ENCODE measurements at regions of chr11 and their contacts with region 1.

Region 1: DNA sequence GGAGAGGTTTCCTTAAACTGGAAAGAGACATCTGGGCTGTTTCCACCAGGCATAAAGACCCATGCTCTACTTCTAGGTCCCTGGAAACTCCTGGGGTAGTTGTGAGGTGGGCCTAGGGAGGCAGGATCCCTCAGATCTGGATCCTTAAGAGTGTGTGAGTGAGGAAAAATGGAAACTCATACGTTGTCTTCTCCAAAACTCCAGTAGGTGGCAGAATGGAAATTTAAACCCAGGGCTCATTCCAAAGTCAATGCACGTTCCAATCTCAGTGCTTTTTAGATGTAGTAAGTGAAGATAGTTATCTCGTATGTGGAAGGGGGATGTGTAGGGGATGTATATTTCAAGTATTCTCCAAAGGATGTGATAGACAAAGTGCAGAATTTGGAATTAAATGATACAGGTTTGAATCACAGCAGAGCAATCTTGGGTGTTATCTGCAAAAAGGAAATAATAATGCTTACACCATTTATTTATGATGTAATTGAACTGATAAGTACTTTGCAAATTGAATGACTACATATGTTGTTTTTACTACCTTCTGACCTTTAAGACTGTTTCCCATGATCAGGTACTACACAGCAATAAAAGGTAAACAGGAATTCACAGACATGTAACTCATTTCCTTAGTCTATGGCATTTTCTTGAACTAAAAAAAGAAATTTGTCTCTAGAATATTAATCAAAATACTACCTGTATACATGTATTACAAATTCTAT is 13.1 kb upstream of the MMP1 start:
- DNase-seq: peak; percentile 55
- H3K4me3 ChIP-seq: no peak overlapping the region
- H3K27ac ChIP-seq: no peak overlapping the region
- H3K4me1 ChIP-seq: peaks cover 5% of the 10 kb centered on the region
- H3K27me3 ChIP-seq: no peaks in the 10 kb centered on the region

Region 2: DNA sequence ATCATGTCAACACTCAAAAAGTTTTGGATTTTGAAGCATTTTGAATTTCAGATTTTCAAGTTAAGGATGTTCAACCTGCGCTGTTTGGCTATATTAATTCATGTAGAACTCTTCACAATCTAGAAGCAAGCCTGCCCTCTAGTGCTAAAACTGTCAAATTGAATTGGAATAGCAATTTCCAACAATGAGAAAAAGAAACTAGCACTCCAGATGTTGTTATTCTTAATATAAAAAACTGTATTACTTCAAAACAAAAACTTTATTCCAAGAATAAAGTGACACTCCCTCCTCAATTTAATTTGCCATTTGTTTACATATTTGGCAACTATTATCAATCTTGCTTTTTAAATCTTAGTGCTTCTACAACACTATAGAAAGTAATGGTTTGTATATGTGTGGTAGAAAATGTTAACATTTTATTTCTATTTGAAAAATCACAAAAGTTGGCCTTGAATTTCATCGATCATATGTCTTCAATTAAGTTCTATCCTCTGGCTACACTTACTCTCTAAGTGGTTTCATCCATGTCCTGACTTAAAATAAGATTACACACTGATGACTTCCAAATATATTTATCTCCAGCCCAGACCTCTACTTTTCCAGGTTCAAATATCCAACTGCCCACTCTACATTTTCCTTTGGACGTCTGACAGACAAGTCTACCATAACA is 244.3 kb after region 1 on chr11:
- in situ Hi-C with region 1: loop called (anchors 25 kb)
- DNase-seq: peak; percentile 79
- H3K4me3 ChIP-seq: no peak overlapping the region
- H3K27ac ChIP-seq: no peak overlapping the region
- H3K4me1 ChIP-seq: peaks cover 24% of the 10 kb centered on the region
- H3K27me3 ChIP-seq: no peaks in the 10 kb centered on the region